Activated T-helper 1 cell treated with anti-CD3 and anti-CD28 coated beads, Interleukin-12 subunit alpha, Interleukin-12 subunit beta, Interleukin-2, Interleukin-4 antibody, amounts not matched to agents 30 ng/mL and 10 ng/mL and 1 ng/mL, durations not matched to agents 14 hours and 24 hours and 36 hours (primary cell): ENCODE measurements at regions of chr21 and their contacts with region 1.

Region 1: GRCh38 chr21:32727687-32728455 is at the start of gene SYNJ1:
- DNase-seq: peak; percentile 94
- H3K4me3 Mint-ChIP-seq: peak within 1 kb of the TSS; percentile 98
- H3K27ac Mint-ChIP-seq: peak within 1 kb of the TSS; percentile 96
- H3K4me1 Mint-ChIP-seq: peaks cover 48% of the 10 kb centered on the region
- H3K27me3 Mint-ChIP-seq: no peaks in the 10 kb centered on the region
- total RNA-seq, gene SYNJ1: 13.1 and 13.7 TPM in 2 replicates

Region 2: DNA sequence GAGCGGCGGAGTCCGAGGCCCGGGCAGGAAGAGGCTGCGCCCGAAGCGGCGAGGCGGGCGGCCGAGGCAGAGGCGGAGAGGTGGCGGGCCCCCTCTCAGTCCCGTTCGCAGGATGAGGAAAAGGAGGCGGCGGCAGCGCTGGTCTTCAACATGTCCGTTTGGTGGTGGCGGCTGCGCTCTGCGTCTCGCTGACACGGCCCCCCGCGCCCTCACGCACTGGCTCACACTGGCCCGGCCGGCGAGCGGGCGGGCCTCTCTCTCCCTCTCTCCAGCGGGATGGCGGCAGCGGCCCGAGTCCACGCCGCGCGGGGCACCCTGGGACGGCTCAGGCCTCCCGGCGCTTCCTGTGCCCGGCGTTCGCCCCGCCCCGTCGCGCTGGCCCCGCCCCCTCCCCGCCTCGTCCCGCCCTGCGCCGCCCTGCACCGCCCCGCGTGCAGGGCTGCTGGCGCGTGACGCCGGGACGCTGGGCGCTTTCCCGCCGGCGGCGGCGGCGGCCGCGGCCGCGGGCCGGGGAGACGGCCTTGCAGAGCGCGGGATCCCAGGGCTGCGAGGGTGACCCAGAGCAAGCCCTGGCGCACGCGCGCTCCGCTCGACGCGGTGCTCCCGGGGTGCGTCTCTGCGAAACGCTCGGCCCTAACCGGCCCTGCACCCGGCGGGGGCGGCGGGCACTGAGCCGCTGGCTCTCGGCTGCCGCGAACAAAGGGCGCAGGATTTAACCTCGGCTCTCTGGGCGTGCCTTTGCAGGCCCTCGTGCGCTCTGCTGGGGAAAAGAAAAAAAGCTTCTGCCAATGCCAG is 995.9 kb before region 1 on chr21 and contains the start of gene SCAF4:
- intact Hi-C with region 1: loop called (anchors 5 kb)
- DNase-seq: peak; percentile 78
- H3K4me3 Mint-ChIP-seq: no peak within 1 kb of the TSS
- H3K27ac Mint-ChIP-seq: peak within 1 kb of the TSS; percentile 79
- H3K4me1 Mint-ChIP-seq: no peaks in the 10 kb centered on the region
- H3K27me3 Mint-ChIP-seq: no peaks in the 10 kb centered on the region
- total RNA-seq, gene SCAF4: 66.1 and 70.6 TPM in 2 replicates

Region 3: DNA sequence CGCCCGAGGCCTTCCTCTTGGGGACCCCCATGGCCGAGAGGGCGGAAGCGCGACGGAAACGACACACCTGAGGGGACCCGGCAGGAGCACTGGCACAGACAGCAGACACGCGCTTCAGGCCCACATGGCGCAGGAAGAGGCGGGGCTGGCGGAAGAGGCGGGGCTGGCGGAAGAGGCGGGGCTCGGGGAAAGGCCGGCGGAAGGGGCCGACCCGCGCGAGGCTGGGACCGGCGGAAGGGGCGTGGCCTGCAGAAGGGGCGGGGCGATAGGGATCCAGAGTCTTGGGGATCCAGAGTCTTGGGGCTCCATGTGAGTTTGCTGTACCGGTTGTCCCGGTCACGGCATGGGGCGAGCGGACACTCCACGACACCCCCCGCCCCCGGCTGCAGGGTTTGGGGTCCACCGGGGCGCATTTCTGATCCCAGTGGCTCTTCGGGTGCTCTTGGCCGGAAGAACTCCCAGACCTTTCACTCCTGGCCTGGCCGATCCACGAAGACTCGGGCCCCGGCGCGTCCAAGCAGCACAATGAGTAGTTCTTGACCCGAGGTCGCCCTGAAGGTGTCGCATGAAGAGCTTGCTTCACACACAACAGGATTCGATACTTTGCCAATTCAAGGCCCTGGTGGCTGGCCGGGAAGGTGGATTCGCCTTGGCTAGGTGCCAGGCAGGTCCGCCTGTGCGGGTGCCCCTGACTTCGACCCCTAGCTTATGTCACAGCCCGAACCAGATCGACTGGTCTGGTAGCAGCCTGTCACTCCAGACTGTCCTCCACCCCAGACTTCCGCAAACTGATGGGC is 334.8 kb before region 1 on chr21 and contains the start of gene URB1:
- intact Hi-C with region 1: loop called (anchors 1 kb)
- DNase-seq: peak; percentile 89
- H3K4me3 Mint-ChIP-seq: peak within 1 kb of the TSS; percentile 91
- H3K27ac Mint-ChIP-seq: peak within 1 kb of the TSS; percentile 88
- H3K4me1 Mint-ChIP-seq: peaks cover 48% of the 10 kb centered on the region
- H3K27me3 Mint-ChIP-seq: peaks cover 3% of the 10 kb centered on the region
- total RNA-seq, gene URB1: 42.1 and 42.8 TPM in 2 replicates

Region 4: GRCh38 chr21:32612075-32612998 is 115.5 kb before region 1 on chr21 and contains the start of gene CFAP298:
- intact Hi-C with region 1: loop called (anchors 1 kb)
- DNase-seq: peak; percentile 84
- H3K4me3 Mint-ChIP-seq: peak within 1 kb of the TSS; percentile 96
- H3K27ac Mint-ChIP-seq: peak within 1 kb of the TSS; percentile 93
- H3K4me1 Mint-ChIP-seq: peaks cover 8% of the 10 kb centered on the region
- H3K27me3 Mint-ChIP-seq: peaks cover 4% of the 10 kb centered on the region
- total RNA-seq, gene CFAP298: 52.9 and 54.6 TPM in 2 replicates

Region 5: GRCh38 chr21:32712043-32712442 is 15.8 kb before region 1 on chr21:
- intact Hi-C with region 1: loop called (anchors 1 kb)
- DNase-seq: peak; percentile 20
- H3K4me3 Mint-ChIP-seq: no peak overlapping the region
- H3K27ac Mint-ChIP-seq: no peak overlapping the region
- H3K4me1 Mint-ChIP-seq: peaks cover 22% of the 10 kb centered on the region
- H3K27me3 Mint-ChIP-seq: no peaks in the 10 kb centered on the region

Region 6: DNA sequence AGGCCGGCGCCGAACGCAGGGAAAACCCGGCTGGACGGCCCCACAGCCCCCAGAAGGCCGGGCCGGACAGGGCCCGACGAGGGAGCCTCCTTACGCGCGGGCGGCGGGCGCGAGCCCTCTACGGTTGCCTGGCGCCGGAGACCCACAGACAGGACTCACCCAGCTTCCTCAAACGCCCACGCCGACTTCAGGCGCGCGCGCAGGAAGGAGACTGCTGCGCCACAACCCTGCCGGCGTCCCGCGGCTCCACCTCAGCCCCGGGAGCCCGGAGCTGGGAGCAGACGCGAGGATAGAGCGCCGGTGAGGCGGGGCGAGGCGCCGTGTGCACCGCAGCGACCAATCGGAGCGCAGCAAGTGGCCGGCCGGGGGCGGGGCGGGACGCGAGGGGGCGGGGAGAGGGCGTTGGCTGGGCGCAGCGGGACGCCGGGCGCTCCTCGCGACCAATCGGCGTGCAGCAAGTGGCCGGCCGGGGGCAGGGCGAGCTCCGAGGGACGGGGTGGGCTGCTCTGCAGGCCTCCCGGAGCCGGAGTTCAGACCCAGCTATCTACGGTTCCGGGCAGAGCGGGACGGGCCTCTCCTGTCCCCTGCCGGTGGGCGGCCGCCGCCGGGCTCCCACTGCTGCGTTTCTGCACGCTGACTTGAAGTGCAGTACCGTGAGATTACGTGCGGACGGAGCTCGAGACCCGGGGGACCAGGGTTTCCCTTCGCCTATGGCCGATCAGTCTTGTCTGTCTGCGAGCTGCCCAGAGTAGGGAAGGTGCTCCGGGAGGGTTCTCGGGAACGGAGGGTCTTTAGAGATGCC is 752.0 kb after region 1 on chr21 and contains the start of gene TMEM50B:
- intact Hi-C with region 1: loop called (anchors 1 kb)
- DNase-seq: peak; percentile 93
- H3K4me3 Mint-ChIP-seq: peak within 1 kb of the TSS; percentile 88
- H3K27ac Mint-ChIP-seq: peak within 1 kb of the TSS; percentile 84
- H3K4me1 Mint-ChIP-seq: peaks cover 23% of the 10 kb centered on the region
- H3K27me3 Mint-ChIP-seq: peaks cover 6% of the 10 kb centered on the region
- total RNA-seq, gene TMEM50B: 12.0 and 14.0 TPM in 2 replicates